Activated T-helper 1 cell treated with anti-CD3 and anti-CD28 coated beads, Interleukin-12 subunit alpha, Interleukin-12 subunit beta, Interleukin-2, Interleukin-4 antibody, amounts not matched to agents 30 ng/mL and 10 ng/mL and 1 ng/mL, durations not matched to agents 14 hours and 24 hours and 36 hours (primary cell): ENCODE measurements at regions of chr17 and their contacts with region 1.

Region 1: GRCh38 chr17:80426681-80427326 is 11.8 kb downstream of the ENDOV start:
- DNase-seq: peak; percentile 88
- H3K4me3 Mint-ChIP-seq: no peak overlapping the region
- H3K27ac Mint-ChIP-seq: no peak overlapping the region
- H3K4me1 Mint-ChIP-seq: peaks cover 12% of the 10 kb centered on the region
- H3K27me3 Mint-ChIP-seq: peaks cover 2% of the 10 kb centered on the region

Region 2: GRCh38 chr17:80219013-80219762 is 207.6 kb before region 1 on chr17:
- intact Hi-C with region 1: no loop called
- DNase-seq: peak; percentile 75
- H3K4me3 Mint-ChIP-seq: peak overlapping the region; percentile 85
- H3K27ac Mint-ChIP-seq: peak overlapping the region; percentile 85
- H3K4me1 Mint-ChIP-seq: peaks cover 20% of the 10 kb centered on the region
- H3K27me3 Mint-ChIP-seq: no peaks in the 10 kb centered on the region

Region 3: GRCh38 chr17:80349151-80349651 is 77.6 kb before region 1 on chr17:
- intact Hi-C with region 1: no loop called
- DNase-seq: no peak
- H3K4me3 Mint-ChIP-seq: no peak overlapping the region
- H3K27ac Mint-ChIP-seq: peak overlapping the region; percentile 12
- H3K4me1 Mint-ChIP-seq: peaks cover 18% of the 10 kb centered on the region
- H3K27me3 Mint-ChIP-seq: no peaks in the 10 kb centered on the region

Region 4: GRCh38 chr17:80414803-80415625 is 11.8 kb before region 1 on chr17 and contains the start of gene ENDOV:
- intact Hi-C with region 1: loop called (anchors 1 kb)
- DNase-seq: peak; percentile 90
- H3K4me3 Mint-ChIP-seq: peak within 1 kb of the TSS; percentile 87
- H3K27ac Mint-ChIP-seq: peak within 1 kb of the TSS; percentile 65
- H3K4me1 Mint-ChIP-seq: peaks cover 18% of the 10 kb centered on the region
- H3K27me3 Mint-ChIP-seq: peaks cover 16% of the 10 kb centered on the region
- total RNA-seq, gene ENDOV: 15.6 and 16.9 TPM in 2 replicates

Region 5: DNA sequence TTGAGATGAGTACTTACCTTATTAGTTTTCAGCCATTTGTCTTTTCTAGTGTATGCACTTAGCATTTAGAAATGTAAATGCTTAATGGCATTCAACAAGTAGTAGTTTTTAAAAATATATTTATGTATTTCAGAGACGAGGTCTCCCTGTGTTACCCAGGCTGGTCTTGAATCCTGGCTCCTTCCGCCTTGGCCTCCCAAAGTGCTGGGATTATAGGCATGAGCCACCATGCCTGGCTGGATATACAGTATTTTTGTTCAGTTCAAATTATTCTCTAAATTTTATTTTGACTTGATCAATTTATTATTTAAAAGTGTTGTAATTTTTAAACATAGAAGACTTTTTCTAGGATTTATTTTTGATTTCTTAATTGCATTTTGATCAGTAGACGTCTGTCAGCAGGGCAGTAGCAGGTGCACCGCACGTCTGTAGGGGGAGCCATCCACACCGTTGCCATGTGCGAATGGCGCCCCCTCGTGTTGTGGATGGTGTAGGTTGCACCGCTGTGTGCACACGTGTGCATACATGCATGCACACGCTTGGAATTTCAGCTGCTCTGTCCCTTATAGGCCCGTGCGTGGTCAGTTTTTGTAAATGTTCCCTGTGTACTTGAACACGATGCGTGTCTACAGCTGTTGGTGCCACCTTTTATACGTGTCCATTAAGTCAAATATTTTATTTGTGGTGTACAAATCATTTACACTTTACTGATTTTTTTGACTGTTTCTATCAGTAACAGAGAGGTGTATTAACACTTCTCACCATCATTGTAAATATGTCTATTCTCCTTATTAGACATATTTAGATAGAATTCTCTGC is 148.5 kb after region 1 on chr17:
- intact Hi-C with region 1: loop called (anchors 1 kb)
- DNase-seq: peak; percentile 84
- H3K4me3 Mint-ChIP-seq: no peak overlapping the region
- H3K27ac Mint-ChIP-seq: peak overlapping the region; percentile 2
- H3K4me1 Mint-ChIP-seq: peaks cover 31% of the 10 kb centered on the region
- H3K27me3 Mint-ChIP-seq: no peaks in the 10 kb centered on the region

Region 6: GRCh38 chr17:80585890-80586845 is 159.4 kb after region 1 on chr17:
- intact Hi-C with region 1: no loop called
- DNase-seq: no peak
- H3K4me3 Mint-ChIP-seq: peak overlapping the region; percentile 9
- H3K27ac Mint-ChIP-seq: peak overlapping the region; percentile 31
- H3K4me1 Mint-ChIP-seq: peaks cover 62% of the 10 kb centered on the region
- H3K27me3 Mint-ChIP-seq: no peaks in the 10 kb centered on the region

Region 7: DNA sequence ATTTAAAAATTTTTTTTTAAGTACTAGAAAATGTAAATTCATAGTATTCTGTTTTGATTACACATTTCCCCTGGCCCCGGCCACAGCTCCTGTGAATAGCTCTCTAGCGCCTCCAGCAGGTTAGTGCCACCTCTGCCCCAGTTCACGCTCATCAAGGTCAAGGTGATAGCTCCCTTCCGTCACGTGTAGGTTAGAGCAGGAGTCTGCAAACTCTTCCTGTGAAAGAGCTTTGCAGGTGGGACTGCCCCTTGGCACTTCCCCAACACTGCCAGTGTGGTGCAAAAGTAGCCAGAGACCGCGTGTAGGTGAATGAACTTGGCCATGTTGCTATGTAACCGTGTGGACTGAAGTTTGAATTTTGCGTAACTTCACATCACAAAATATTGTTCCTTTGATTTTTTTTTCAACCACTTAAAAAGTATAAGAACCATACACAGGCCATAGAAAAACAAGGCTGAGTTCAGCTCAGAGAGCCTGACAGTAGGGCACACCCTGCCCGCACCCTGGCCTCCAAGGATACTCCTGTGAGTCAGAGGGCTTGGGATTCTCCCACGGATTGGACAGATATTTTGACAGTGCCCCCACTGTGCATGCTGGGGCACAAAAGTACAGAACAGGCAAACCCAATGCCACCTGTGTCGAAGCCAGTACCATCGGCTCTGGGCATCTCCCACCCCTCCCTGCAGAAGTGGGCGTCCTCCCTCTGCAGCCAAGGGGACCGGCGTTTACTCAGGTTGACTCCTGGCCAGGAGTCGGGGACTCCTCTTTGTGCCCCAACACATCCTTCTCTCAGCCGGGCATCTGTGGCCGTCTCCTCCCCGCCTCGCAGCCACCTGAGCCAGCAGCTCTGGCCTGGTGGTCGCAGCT is 472.8 kb after region 1 on chr17:
- intact Hi-C with region 1: loop called (anchors 1 kb)
- DNase-seq: peak; percentile 72
- H3K4me3 Mint-ChIP-seq: no peak overlapping the region
- H3K27ac Mint-ChIP-seq: peak overlapping the region; percentile 48
- H3K4me1 Mint-ChIP-seq: peaks cover 56% of the 10 kb centered on the region
- H3K27me3 Mint-ChIP-seq: no peaks in the 10 kb centered on the region

Region 8: DNA sequence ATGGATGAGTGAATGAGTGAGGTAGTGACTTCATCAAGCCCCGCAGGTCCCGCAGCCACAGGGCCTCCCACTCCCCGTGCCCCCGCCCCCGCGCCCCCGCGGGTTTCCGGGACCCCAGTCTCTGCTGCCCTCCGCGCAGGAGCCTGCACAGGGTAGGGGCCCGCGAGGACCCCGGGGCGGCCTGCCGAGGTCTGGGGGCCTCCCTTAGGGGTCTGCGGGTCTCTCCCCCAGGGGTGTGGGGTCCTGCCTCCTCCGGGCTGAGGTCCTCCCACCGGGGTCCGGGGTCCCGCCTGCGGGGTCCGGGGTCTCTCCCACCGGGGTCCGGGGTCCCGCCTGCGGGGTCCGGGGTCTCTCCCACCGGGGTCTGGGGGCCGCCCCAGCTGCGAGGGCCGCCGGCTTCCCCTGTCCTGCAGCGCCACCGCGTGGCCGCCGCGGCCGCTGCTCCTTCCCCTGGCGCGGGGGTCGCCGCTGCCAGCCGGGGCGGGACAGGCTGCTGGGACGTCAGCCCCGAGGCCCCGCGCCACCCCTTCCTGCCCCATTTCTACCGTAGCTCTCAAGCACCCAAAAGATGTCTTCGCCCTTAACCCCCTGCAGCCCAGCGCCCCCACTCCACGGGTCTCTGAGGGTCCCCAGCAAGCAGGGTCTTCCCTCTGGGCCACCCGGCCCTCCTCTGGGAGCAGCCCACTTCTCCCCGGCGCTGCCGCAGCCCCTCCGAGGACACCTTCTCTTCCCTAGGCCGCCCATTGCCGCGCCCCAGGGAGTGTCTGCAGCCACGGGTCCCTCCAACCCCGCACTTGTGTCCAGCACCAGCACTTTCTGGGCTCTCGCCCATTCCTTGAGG is 554.5 kb after region 1 on chr17:
- intact Hi-C with region 1: loop called (anchors 1 kb)
- DNase-seq: no peak
- H3K4me3 Mint-ChIP-seq: no peak overlapping the region
- H3K27ac Mint-ChIP-seq: no peak overlapping the region
- H3K4me1 Mint-ChIP-seq: peaks cover 11% of the 10 kb centered on the region
- H3K27me3 Mint-ChIP-seq: peaks cover 9% of the 10 kb centered on the region

Region 9: DNA sequence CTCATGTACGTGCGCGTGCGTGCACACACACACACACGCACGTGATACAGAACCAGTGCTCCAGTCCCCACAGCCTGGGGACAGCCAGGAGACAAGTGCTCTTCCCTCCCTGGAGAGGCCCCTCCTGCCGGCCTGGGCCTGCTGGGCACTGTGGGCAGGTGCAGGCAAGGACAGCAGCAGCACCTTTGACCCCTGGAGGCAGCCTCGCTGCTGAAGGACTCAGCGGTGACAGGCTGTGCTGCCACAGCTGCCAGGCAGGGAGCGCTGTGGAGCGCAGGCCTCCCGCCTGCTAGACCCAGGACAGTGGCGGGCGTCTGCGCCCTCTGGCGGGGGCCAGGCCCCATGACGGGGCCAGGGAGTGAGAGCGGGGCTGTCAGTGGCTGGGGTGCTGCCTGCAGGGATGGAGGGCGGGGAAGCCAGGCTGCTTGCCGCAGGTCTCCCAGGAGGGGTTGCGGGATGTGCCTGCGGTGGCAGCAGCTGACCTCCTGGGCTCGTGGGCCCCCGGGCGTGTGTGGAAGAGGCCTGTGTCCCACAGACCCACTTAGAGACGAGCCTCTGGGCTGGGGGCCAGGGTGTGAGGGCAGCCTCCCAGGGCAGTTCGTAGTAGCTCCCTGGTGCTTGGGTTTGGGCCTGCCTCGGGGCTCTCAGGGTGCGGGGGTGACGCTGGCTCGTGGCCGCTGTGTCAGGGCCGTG is 675.0 kb after region 1 on chr17:
- intact Hi-C with region 1: loop called (anchors 1 kb)
- DNase-seq: peak; percentile 86
- H3K4me3 Mint-ChIP-seq: no peak overlapping the region
- H3K27ac Mint-ChIP-seq: no peak overlapping the region
- H3K4me1 Mint-ChIP-seq: peaks cover 2% of the 10 kb centered on the region
- H3K27me3 Mint-ChIP-seq: peaks cover 1% of the 10 kb centered on the region